Panc1 (cell line): ENCODE measurements at regions of chr5 and their contacts with region 1.

Region 1: DNA sequence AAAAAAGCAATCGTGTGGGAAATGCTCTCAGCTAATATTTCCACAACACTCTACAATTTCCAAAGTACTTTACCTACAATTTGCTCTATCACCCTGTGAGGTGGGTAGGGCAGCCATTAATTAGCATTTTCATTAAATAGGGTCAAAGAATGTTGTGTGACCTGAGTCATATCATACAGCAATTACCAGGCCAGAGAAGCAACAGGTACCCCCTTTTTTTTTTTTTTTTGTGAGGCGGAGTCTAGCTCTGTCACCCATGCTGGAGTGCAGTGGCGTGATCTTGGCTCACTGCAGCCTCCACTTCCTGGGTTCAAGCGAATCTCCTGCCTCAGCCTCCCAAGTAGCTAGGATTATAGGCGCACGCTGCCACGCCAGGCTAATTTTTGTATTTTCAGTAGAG is 108.8 kb upstream of the RETREG1 start:
- DNase-seq: no peak
- ATAC-seq: no peak
- H3K4me3 ChIP-seq: no peak overlapping the region
- H3K27ac ChIP-seq: no peak overlapping the region
- H3K4me1 ChIP-seq: peaks cover 7% of the 10 kb centered on the region; the same call in 1 of the 2 replicates
- H3K27me3 ChIP-seq: no peaks in the 10 kb centered on the region
- CTCF ChIP-seq: no peak

Region 2: DNA sequence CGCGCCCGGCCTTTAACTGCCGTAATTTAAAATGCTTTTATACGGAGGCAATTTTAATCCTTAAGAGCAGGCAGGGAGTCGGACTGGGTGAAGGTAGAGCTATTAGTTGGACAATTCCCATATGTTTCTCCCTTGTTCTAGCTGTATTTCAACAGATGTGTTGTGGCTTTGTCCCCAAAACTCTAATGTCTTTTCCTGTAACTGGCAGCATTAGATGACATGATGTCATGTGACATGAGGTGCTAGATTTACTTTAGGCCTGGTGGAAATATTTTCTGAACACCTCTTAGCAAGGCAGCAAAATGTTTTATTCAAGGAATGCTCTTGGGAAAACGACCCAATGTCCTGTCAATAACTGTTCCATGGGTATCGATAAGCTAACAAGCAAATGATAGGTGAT is 202.0 kb after region 1 on chr5:
- CTCF ChIA-PET with region 1: no interaction called
- POLR2A ChIA-PET with region 1: interaction called, 11 read pairs
- in situ Hi-C with region 1: no loop called
- intact Hi-C with region 1: no loop called
- DNase-seq: no peak
- ATAC-seq: no peak
- H3K4me3 ChIP-seq: no peak overlapping the region
- H3K27ac ChIP-seq: peak overlapping the region; percentile 52
- H3K4me1 ChIP-seq: peaks cover 40% of the 10 kb centered on the region
- H3K27me3 ChIP-seq: no peaks in the 10 kb centered on the region
- CTCF ChIP-seq: no peak

Region 3: GRCh38 chr5:17037751-17038150 is 312.2 kb after region 1 on chr5:
- CTCF ChIA-PET with region 1: no interaction called
- POLR2A ChIA-PET with region 1: no interaction called
- in situ Hi-C with region 1: no loop called
- intact Hi-C with region 1: no loop called
- DNase-seq: no peak
- ATAC-seq: no peak
- H3K4me3 ChIP-seq: no peak overlapping the region
- H3K27ac ChIP-seq: no peak overlapping the region
- H3K4me1 ChIP-seq: no peaks in the 10 kb centered on the region
- H3K27me3 ChIP-seq: no peaks in the 10 kb centered on the region
- CTCF ChIP-seq: no peak